GM18951 (cell line): ENCODE measurements at regions of chr11 and their contacts with region 1.

Region 1: DNA sequence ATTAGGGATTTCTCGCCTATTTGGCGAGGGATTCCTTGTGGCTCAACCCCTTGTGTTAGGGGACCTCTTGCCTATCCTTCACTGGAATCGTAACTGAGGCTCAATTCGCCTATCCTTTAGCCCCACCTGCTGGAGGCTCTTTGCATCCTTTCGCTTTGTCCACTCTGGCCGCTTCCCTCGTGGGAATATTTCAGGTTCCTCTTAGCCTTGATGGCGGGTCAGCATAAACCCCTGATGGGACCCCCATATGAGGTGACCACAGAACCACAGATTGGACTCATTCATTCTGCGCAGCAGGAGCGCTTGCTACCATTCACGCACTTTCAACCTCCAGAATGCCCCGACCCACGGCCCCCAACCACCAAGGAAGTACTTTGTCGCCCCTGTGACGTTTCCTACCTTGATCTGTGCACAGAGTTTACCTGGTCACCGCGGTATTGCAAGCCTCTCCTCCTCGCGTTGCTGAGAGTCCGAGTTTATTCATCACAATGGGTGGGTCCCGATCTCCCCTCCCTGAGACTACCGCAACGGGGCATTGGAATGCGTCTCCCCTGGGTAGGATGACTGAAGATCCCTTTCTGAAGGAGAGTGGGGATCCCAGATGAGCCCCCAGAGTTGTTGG is at the start of gene OR52N2:
- POLR2A ChIP-seq: no peak

Region 2: GRCh38 chr11:5452712-5453111 is 355.9 kb before region 1 on chr11:
- in situ Hi-C with region 1: loop called (anchors 25 kb)
- POLR2A ChIP-seq: no peak